ENCODE measurements at regions of chr22 and their contacts with region 1.

Region 1: GRCh38 chr22:31290494-31291471 is 1.5 kb downstream of the PIK3IP1 start:
- DNase-seq: peak; percentile 95
- ATAC-seq: peak; percentile 85
- H3K4me3 Mint-ChIP-seq: peak overlapping the region; percentile 93
- H3K27ac Mint-ChIP-seq: peak overlapping the region; percentile 98
- H3K4me1 Mint-ChIP-seq: peaks cover 58% of the 10 kb centered on the region
- H3K27me3 Mint-ChIP-seq: no peaks in the 10 kb centered on the region

Region 2: GRCh38 chr22:31272522-31273446 is 18.0 kb before region 1 on chr22:
- POLR2A ChIA-PET with region 1: interaction called, 127 read pairs
- DNase-seq: no peak
- ATAC-seq: peak; percentile 51
- H3K4me3 Mint-ChIP-seq: no peak overlapping the region
- H3K27ac Mint-ChIP-seq: no peak overlapping the region
- H3K4me1 Mint-ChIP-seq: peaks cover 4% of the 10 kb centered on the region
- H3K27me3 Mint-ChIP-seq: no peaks in the 10 kb centered on the region

Region 3: DNA sequence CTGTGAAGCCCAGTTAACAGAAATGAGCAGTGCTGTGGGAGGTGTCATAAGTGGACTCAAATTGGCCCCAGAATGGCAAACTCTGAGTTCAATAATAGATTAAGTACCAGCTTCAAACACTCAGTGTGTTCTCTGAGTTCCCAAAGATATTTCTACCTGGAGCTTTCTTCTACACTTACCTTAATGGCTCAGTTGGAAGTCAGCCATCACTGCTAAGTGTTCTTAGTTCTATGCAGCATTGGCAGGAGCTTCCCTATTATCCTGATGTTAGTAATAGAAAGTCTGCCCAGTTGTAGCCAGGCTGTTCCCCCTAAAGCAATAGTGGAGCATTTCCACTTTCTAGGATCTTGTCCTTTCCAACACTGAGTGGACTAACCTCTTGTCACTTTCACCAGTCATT is 11.2 kb after region 1 on chr22:
- POLR2A ChIA-PET with region 1: interaction called, 19 read pairs
- DNase-seq: no peak
- ATAC-seq: no peak
- H3K4me3 Mint-ChIP-seq: no peak overlapping the region
- H3K27ac Mint-ChIP-seq: no peak overlapping the region
- H3K4me1 Mint-ChIP-seq: peaks cover 10% of the 10 kb centered on the region
- H3K27me3 Mint-ChIP-seq: no peaks in the 10 kb centered on the region

Region 4: GRCh38 chr22:31313366-31314147 is 22.8 kb after region 1 on chr22:
- POLR2A ChIA-PET with region 1: interaction called, 22 read pairs
- DNase-seq: peak; percentile 58
- ATAC-seq: no peak
- H3K4me3 Mint-ChIP-seq: no peak overlapping the region
- H3K27ac Mint-ChIP-seq: peak overlapping the region; percentile 55
- H3K4me1 Mint-ChIP-seq: peaks cover 6% of the 10 kb centered on the region
- H3K27me3 Mint-ChIP-seq: no peaks in the 10 kb centered on the region